ENCODE measurements at regions of chr6 and their contacts with region 1.

Region 1: GRCh38 chr6:10694302-10695085 is at the starts of genes C6orf52 and PAK1IP1:
- DNase-seq: peak; percentile 84
- ATAC-seq: peak; percentile 94
- H3K4me3 Mint-ChIP-seq: peak within 1 kb of the TSS; percentile 99
- H3K27ac Mint-ChIP-seq: peak within 1 kb of the TSS; percentile 100
- H3K4me1 Mint-ChIP-seq: peaks cover 29% of the 10 kb centered on the region
- H3K27me3 Mint-ChIP-seq: no peaks in the 10 kb centered on the region
- CTCF ChIP-seq: no peak
- total RNA-seq, gene C6orf52: 1.0 and 1.6 TPM in 2 replicates
- total RNA-seq, gene PAK1IP1: 18.1 and 18.3 TPM in 2 replicates

Region 2: GRCh38 chr6:10404107-10404798 is 290.2 kb before region 1 on chr6:
- CTCF ChIA-PET with region 1: no interaction called
- POLR2A ChIA-PET with region 1: no interaction called
- intact Hi-C with region 1: loop called (anchors 1 kb)
- DNase-seq: peak; percentile 80
- ATAC-seq: peak; percentile 94
- H3K4me3 Mint-ChIP-seq: peak overlapping the region; percentile 78
- H3K27ac Mint-ChIP-seq: peak overlapping the region; percentile 63
- H3K4me1 Mint-ChIP-seq: peaks cover 12% of the 10 kb centered on the region
- H3K27me3 Mint-ChIP-seq: peaks cover 54% of the 10 kb centered on the region
- CTCF ChIP-seq: no peak

Region 3: DNA sequence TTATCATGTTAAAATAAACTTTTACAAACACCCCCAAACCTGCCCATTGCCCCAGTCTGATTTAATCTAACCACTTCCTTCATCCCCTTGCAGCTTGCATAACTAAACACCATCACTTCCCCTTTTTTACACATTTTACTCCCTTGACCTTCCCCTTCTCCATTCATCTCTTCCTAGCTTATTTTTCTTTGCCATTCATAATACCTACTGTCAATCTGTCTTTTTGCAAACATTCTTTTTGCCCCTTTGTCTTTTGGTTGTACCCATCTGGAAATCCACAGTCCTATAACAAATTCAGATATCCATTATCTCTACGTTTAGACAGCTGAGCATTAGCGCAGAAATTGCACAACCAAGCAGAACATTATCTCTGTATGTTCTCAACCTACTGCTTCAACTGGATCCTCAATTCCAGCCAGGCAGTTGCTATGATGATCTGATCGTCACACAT is 51.3 kb before region 1 on chr6:
- CTCF ChIA-PET with region 1: interaction called, 3 read pairs
- POLR2A ChIA-PET with region 1: no interaction called
- intact Hi-C with region 1: loop called (anchors 2 kb)
- DNase-seq: no peak
- ATAC-seq: peak; percentile 91
- H3K4me3 Mint-ChIP-seq: peak overlapping the region; percentile 55
- H3K27ac Mint-ChIP-seq: peak overlapping the region; percentile 15
- H3K4me1 Mint-ChIP-seq: peaks cover 28% of the 10 kb centered on the region
- H3K27me3 Mint-ChIP-seq: no peaks in the 10 kb centered on the region
- CTCF ChIP-seq: no peak

Region 4: DNA sequence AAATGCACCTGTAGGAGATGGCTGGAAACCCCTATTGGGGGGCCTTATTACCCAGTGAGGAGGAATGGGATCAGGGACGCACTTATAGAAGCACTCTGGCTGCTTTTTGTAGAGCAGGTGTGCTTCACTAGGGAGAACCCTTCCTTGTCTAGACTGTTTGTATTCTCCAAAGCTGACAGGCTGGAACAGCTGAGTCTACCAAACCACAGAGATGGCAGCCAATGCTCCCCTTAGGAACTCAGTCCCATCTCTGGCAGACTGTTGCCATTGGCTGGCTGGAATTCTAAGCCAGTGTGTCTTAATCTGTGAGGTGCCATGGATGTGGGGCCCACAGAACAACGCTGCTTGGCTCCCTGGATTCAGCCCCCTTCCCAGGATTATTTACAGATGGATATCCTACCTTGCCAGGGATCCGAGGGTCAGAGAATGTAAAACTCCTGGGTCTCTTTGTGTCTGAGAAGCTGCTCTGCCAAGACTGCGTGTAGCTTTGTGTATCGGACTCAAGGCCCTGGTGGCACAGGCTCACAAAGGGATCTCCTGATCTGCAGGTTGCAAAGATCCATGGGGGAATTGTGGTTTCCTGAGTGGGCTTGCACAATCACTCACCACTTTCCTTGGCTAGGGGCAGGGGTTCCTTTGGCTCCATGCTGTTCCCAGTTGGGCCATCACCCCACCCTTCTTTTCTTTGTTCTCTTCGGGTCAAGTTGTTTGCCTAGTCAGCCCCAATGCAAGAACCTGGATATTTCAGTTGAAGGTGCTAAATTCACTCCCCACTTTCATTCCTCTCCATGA is 26.2 kb before region 1 on chr6:
- CTCF ChIA-PET with region 1: no interaction called
- POLR2A ChIA-PET with region 1: no interaction called
- intact Hi-C with region 1: no loop called
- DNase-seq: no peak
- ATAC-seq: no peak
- H3K4me3 Mint-ChIP-seq: no peak overlapping the region
- H3K27ac Mint-ChIP-seq: no peak overlapping the region
- H3K4me1 Mint-ChIP-seq: peaks cover 3% of the 10 kb centered on the region
- H3K27me3 Mint-ChIP-seq: peaks cover 23% of the 10 kb centered on the region
- CTCF ChIP-seq: no peak

Region 5: DNA sequence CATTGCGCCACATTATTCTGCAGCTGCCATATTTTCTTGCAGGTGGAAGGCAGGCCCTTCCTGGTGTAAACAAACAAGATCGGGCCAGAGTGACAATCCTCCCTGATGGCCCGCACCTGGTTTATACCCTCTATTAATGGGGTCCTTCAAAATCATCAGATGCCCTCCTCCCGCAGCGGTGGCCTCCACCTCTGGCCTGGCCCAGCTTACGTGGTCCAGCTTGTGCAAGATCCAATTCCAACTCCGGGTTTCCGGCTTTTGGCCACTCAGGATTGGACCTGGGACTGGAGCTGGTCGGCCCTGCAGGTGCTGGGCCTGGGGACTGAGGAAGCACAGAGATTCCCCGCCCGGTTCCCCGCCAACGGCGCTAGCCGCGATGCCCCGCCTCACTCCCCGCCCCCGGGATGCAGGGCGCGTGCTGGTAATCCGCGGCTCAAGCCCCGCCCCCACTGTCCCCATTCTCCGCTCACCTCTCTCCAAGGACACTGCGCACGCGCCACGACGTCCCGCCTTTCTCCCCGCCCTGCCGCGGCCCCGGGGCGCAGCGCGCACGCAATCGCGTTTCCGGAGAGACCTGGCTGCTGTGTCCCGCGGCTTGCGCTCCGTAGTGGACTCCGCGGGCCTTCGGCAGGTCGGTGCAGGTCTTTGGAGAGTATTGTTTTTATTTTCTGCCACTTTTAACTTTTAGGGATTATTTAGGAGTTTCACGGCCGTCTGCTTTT is 52.9 kb after region 1 on chr6 and contains the start of gene TMEM14B:
- CTCF ChIA-PET with region 1: no interaction called
- POLR2A ChIA-PET with region 1: interaction called, 27 read pairs
- intact Hi-C with region 1: loop called (anchors 1 kb)
- DNase-seq: peak; percentile 100
- ATAC-seq: peak; percentile 98
- H3K4me3 Mint-ChIP-seq: peak within 1 kb of the TSS; percentile 95
- H3K27ac Mint-ChIP-seq: peak within 1 kb of the TSS; percentile 93
- H3K4me1 Mint-ChIP-seq: peaks cover 34% of the 10 kb centered on the region
- H3K27me3 Mint-ChIP-seq: no peaks in the 10 kb centered on the region
- CTCF ChIP-seq: no peak
- total RNA-seq, gene TMEM14B: 60.3 and 63.4 TPM in 2 replicates

Region 6: DNA sequence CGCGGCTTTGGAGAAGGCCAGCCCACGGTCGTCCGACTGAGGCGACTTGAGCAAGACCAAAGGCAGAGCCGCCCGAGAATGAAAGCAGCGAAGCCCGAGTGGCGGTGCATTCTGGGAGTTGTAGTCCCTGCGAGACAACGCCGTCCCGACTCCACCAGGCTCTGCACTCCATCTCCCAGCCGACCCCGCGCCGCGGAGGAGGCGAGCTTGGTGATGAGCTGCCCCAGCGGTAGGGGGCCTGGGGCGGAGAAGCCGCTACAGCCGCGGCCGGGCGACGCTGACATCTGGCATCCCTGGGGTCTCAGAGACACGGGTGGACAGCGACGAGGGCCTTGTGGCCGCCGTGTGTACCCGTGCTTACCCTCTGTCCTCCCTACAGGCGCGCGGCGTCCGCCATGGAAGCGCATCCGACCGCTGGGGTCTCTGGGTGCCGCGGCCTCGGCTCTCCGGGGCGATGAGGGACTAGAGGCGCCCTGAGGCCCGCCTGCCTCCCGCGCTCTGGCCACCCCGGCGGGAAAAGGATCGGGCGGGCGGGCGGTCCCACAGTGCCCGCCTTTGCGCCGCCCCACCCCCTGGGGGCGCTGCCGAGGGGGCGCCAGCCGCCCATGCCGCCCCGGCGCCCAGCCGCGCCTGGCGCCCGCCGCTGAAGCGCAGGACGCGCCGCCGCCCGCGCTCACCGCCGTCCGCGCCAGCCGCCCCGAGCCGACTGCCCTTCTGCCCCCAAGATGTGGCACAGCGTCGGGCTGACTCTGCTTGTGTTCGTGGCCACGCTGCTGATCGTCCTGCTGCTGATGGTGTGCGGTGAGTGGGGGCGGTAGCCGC is 399.3 kb after region 1 on chr6 and contains the start of gene SMIM13:
- CTCF ChIA-PET with region 1: no interaction called
- POLR2A ChIA-PET with region 1: interaction called, 7 read pairs
- intact Hi-C with region 1: loop called (anchors 1 kb)
- DNase-seq: peak; percentile 90
- ATAC-seq: peak; percentile 90
- H3K4me3 Mint-ChIP-seq: peak within 1 kb of the TSS; percentile 96
- H3K27ac Mint-ChIP-seq: peak within 1 kb of the TSS; percentile 98
- H3K4me1 Mint-ChIP-seq: peaks cover 20% of the 10 kb centered on the region
- H3K27me3 Mint-ChIP-seq: peaks cover 3% of the 10 kb centered on the region
- CTCF ChIP-seq: no peak
- total RNA-seq, gene SMIM13: 5.8 and 5.9 TPM in 2 replicates